Activated B cell treated with CpG ODN at 0.5 μM for 24 hours (primary cell): ENCODE measurements at regions of chr5 and their contacts with region 1.

Region 1: GRCh38 chr5:98827161-98827560 is 53.7 kb downstream of the RGMB start:
- DNase-seq: no peak
- ATAC-seq: no peak
- H3K4me3 Mint-ChIP-seq: no peak overlapping the region
- H3K27ac Mint-ChIP-seq: no peak overlapping the region
- H3K4me1 Mint-ChIP-seq: no peaks in the 10 kb centered on the region
- H3K27me3 Mint-ChIP-seq: no peaks in the 10 kb centered on the region
- CTCF ChIP-seq: no peak

Region 2: GRCh38 chr5:97162045-97162444 is 1665.1 kb before region 1 on chr5:
- CTCF ChIA-PET with region 1: no interaction called
- POLR2A ChIA-PET with region 1: no interaction called
- intact Hi-C with region 1: loop called (anchors 5 kb)
- DNase-seq: no peak
- ATAC-seq: peak; percentile 31
- H3K4me3 Mint-ChIP-seq: no peak overlapping the region
- H3K27ac Mint-ChIP-seq: no peak overlapping the region
- H3K4me1 Mint-ChIP-seq: peaks cover 3% of the 10 kb centered on the region
- H3K27me3 Mint-ChIP-seq: no peaks in the 10 kb centered on the region
- CTCF ChIP-seq: peak; percentile 68